ENCODE measurements at regions of chr16 and their contacts with region 1.

Region 1: GRCh38 chr16:22109258-22109898 is 17.0 kb downstream of the VWA3A start:
- DNase-seq: no peak
- ATAC-seq: no peak
- H3K4me3 ChIP-seq: no peak overlapping the region
- H3K27ac ChIP-seq: no peak overlapping the region
- H3K4me1 ChIP-seq: no peaks in the 10 kb centered on the region
- H3K27me3 ChIP-seq: peaks cover 0 to 9% (median 0%) of the 10 kb centered on the region in 7 donors
- CTCF ChIP-seq: no peak

Region 2: GRCh38 chr16:22023505-22023904 is 85.9 kb before region 1 on chr16:
- intact Hi-C with region 1: no loop called
- DNase-seq: no peak
- ATAC-seq: no peak
- H3K4me3 ChIP-seq: no peak overlapping the region
- H3K27ac ChIP-seq: no peak overlapping the region
- H3K4me1 ChIP-seq: peaks cover 0 to 31% (median 10%) of the 10 kb centered on the region in 9 donors
- H3K27me3 ChIP-seq: no peaks in the 10 kb centered on the region
- CTCF ChIP-seq: no peak

Region 3: GRCh38 chr16:22161999-22162655 is 52.7 kb after region 1 on chr16 and contains the start of gene SDR42E2:
- intact Hi-C with region 1: loop called in 1 of 10 experiments (anchors 10 kb)
- DNase-seq: no peak
- ATAC-seq: peak in 1 of 8 donors; percentile 27
- H3K4me3 ChIP-seq: peak within 1 kb of the TSS in 4 of 10 donors; percentile 13 to 26 (median 21)
- H3K27ac ChIP-seq: no peak within 1 kb of the TSS
- H3K4me1 ChIP-seq: peaks cover 0 to 7% (median 0%) of the 10 kb centered on the region in 9 donors
- H3K27me3 ChIP-seq: peaks cover 0 to 33% (median 31%) of the 10 kb centered on the region in 7 donors
- CTCF ChIP-seq: no peak
- total RNA-seq, gene SDR42E2: 0.09 TPM in 1 of 10 donors, not detected in the others

Region 4: GRCh38 chr16:22174642-22175041 is 65.3 kb after region 1 on chr16:
- intact Hi-C with region 1: loop called in 2 of 10 experiments (anchors 5 to 10 kb)
- DNase-seq: no peak
- ATAC-seq: no peak
- H3K4me3 ChIP-seq: no peak overlapping the region
- H3K27ac ChIP-seq: no peak overlapping the region
- H3K4me1 ChIP-seq: no peaks in the 10 kb centered on the region
- H3K27me3 ChIP-seq: no peaks in the 10 kb centered on the region
- CTCF ChIP-seq: no peak